ENCODE measurements at regions of chrX and their contacts with region 1.

Region 1: GRCh38 chrX:21943460-21944168 is 3.1 kb downstream of the SMS start:
- DNase-seq: peak; percentile 92
- ATAC-seq: peak; percentile 3; the same call in 1 of the 2 replicates
- H3K4me3 ChIP-seq: peak overlapping the region; percentile 51; the same call in 1 of the 2 replicates
- H3K27ac ChIP-seq: peak overlapping the region; percentile 86
- H3K4me1 ChIP-seq: peaks cover 9% of the 10 kb centered on the region
- H3K27me3 ChIP-seq: no peaks in the 10 kb centered on the region
- CTCF ChIP-seq: no peak
- POLR2A ChIP-seq: no peak
- RAD21 ChIP-seq: no peak

Region 2: GRCh38 chrX:20969002-20969401 is 974.6 kb before region 1 on chrX:
- CTCF ChIA-PET with region 1: no interaction called
- POLR2A ChIA-PET with region 1: no interaction called
- dilution Hi-C with region 1: no loop called
- in situ Hi-C with region 1: no loop called
- intact Hi-C with region 1: no loop called
- DNase-seq: no peak
- ATAC-seq: no peak
- H3K4me3 ChIP-seq: no peak overlapping the region
- H3K27ac ChIP-seq: no peak overlapping the region
- H3K4me1 ChIP-seq: no peaks in the 10 kb centered on the region
- H3K27me3 ChIP-seq: no peaks in the 10 kb centered on the region
- CTCF ChIP-seq: no peak
- POLR2A ChIP-seq: no peak
- RAD21 ChIP-seq: no peak

Region 3: GRCh38 chrX:21839334-21840192 is 104.1 kb before region 1 on chrX and contains the start of gene MBTPS2:
- CTCF ChIA-PET with region 1: no interaction called
- POLR2A ChIA-PET with region 1: no interaction called
- dilution Hi-C with region 1: no loop called
- in situ Hi-C with region 1: no loop called
- intact Hi-C with region 1: loop called (anchors 2 kb)
- DNase-seq: peak; percentile 91
- ATAC-seq: peak; percentile 93
- H3K4me3 ChIP-seq: peak within 1 kb of the TSS; percentile 84
- H3K27ac ChIP-seq: peak within 1 kb of the TSS; percentile 96
- H3K4me1 ChIP-seq: no peaks in the 10 kb centered on the region; the same call in 1 of the 2 replicates
- H3K27me3 ChIP-seq: no peaks in the 10 kb centered on the region
- CTCF ChIP-seq: peak; percentile 50
- POLR2A ChIP-seq: peak; percentile 81
- RAD21 ChIP-seq: peak; percentile 65
- total RNA-seq, gene MBTPS2: 4.7 and 6.9 TPM in 2 replicates